Endothelial cell of umbilical vein (primary cell): ENCODE measurements at regions of chr3 and their contacts with region 1.

Region 1: GRCh38 chr3:158249183-158249582 is 139.3 kb downstream of the RSRC1 start:
- DNase-seq: no peak
- H3K4me3 ChIP-seq: no peak overlapping the region
- H3K27ac ChIP-seq: no peak overlapping the region
- H3K4me1 ChIP-seq: no peaks in the 10 kb centered on the region
- H3K27me3 ChIP-seq: no peaks in the 10 kb centered on the region
- CTCF ChIP-seq: no peak
- POLR2A ChIP-seq: no peak

Region 2: DNA sequence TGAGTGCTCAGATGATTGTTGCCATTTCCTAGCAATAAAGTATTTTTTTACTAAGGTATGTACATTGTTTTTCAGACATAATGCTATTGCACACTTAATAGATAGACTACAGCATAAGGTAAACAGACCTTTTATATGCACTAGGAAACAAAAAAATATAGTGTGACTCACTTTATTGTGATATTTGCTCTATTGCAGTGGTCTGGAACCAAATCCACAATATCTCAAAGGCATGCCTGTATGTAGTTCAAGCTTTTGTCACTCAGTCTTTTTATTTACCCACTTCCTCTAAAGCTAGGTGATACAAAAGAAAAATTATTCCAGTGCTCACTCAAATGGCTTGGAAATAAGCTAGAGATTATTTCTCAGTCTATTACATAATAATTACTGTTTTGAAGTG is 536.1 kb before region 1 on chr3:
- CTCF ChIA-PET with region 1: no interaction called
- POLR2A ChIA-PET with region 1: no interaction called
- dilution Hi-C with region 1: no loop called
- intact Hi-C with region 1: loop called (anchors 5 kb)
- DNase-seq: no peak
- H3K4me3 ChIP-seq: no peak overlapping the region
- H3K27ac ChIP-seq: no peak overlapping the region
- H3K4me1 ChIP-seq: no peaks in the 10 kb centered on the region
- H3K27me3 ChIP-seq: no peaks in the 10 kb centered on the region
- CTCF ChIP-seq: no peak
- POLR2A ChIP-seq: no peak

Region 3: GRCh38 chr3:158105710-158106253 is 143.4 kb before region 1 on chr3:
- CTCF ChIA-PET with region 1: no interaction called
- POLR2A ChIA-PET with region 1: no interaction called
- dilution Hi-C with region 1: no loop called
- intact Hi-C with region 1: no loop called
- DNase-seq: no peak
- H3K4me3 ChIP-seq: peak overlapping the region in 2 of 3 experiments; percentile 14 to 19
- H3K27ac ChIP-seq: no peak overlapping the region
- H3K4me1 ChIP-seq: peaks cover 12% of the 10 kb centered on the region
- H3K27me3 ChIP-seq: peaks cover 62 to 88% of the 10 kb centered on the region in 2 experiments
- CTCF ChIP-seq: no peak
- POLR2A ChIP-seq: no peak

Region 4: DNA sequence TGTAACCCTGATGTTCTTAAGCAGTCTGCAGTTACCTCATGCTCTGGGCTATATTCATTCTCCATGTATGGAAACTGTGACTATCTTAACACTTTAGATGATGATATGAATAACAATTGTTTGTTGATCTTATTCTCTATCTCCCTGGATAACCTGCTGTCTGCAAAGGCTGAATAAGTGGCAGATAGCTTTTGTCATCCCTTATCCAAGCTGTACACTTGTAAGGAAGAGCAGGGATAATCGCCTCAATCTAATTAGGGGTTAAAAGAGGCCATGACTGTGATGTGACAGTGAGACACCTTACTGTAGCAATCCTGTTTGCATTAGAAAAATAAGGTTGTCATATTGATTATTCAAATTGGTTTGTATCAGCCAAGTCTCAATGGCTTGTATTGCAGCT is 15.4 kb before region 1 on chr3:
- CTCF ChIA-PET with region 1: no interaction called
- POLR2A ChIA-PET with region 1: no interaction called
- dilution Hi-C with region 1: no loop called
- intact Hi-C with region 1: no loop called
- DNase-seq: no peak
- H3K4me3 ChIP-seq: no peak overlapping the region
- H3K27ac ChIP-seq: no peak overlapping the region
- H3K4me1 ChIP-seq: no peaks in the 10 kb centered on the region
- H3K27me3 ChIP-seq: no peaks in the 10 kb centered on the region
- CTCF ChIP-seq: no peak
- POLR2A ChIP-seq: no peak